Panc1 (cell line): ENCODE measurements at regions of chr13 and their contacts with region 1.

Region 1: DNA sequence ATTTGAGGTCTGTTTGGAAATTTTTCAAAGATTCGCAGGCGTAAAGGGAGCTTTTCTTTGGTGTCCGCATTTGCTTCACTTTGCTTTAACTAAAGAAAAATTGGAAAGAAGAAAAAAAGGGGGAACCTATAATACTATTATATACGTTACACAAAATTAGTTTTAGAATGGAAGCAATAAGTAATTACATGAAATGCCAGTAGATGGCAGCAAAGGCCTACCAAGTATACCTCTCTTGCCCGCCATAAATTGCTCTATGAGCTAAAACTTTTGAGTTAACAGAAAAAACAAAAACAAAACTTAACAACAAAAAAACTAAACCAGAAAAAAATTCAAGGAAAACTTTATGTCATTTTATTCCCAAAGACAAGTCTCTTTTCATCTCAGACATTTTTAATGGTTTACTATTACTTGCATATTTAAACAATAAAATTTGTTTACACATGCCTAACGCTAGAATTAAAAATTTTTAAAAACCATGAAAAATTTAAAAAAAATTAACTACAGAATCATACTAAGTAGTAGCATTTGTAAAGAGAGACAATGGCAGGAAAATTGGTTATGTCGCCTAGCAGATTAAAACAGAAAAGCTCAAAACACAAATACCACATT is 271.4 kb downstream of the NALCN start:
- DNase-seq: no peak
- ATAC-seq: no peak
- H3K4me3 ChIP-seq: no peak overlapping the region
- H3K27ac ChIP-seq: no peak overlapping the region
- H3K4me1 ChIP-seq: no peaks in the 10 kb centered on the region; the same call in 1 of the 2 replicates
- H3K27me3 ChIP-seq: no peaks in the 10 kb centered on the region
- CTCF ChIP-seq: peak; percentile 40; the same call in 1 of the 2 replicates

Region 2: DNA sequence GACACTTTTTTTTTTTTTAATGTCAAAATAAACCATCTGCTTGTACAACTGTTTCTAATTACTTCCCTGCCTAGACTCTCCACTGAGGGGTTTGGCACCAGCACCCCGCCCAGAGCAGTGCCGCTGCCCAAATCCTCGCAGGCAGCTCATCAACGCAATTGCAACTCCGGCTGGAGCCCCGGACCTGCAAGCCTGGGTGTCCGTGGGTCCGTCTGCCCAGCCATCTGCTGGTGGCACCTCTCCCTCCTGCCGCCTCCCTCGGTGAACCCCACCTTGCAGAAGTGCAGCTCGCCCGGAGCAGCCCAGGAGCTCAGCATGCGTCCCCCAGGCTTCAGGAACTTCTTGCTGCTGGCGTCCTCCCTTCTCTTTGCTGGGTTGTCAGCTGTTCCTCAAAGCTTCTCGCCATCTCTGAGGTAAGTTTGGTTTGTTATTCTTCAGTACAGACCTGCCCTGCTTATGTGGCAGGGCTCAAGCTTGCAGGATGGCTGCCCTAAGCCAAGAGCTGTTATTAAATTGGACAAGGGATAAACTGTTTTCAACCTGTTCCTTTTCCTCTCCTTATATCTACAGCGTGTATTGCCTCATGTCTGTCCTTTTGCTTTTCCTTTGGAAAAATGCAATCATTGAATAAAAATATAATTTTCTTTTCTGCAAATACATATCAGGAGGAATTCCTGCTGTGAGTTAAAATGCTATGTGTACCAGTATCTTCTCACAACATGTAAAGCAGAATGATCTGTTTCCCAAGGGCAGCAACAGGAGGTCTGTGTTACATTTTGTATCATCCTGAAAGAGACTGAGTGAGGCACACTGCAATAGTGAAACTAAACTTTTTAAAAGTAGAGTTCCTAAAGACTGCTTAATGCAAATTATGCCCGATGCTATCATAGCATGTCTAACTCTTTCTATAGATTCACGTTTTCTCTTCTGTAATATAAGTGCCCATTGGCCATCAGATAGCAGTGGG is 307.9 kb after region 1 on chr13 and contains the start of gene ITGBL1:
- CTCF ChIA-PET with region 1: no interaction called
- POLR2A ChIA-PET with region 1: no interaction called
- in situ Hi-C with region 1: no loop called
- intact Hi-C with region 1: loop called (anchors 5 kb)
- DNase-seq: no peak
- ATAC-seq: peak; percentile 45
- H3K4me3 ChIP-seq: peak within 1 kb of the TSS; percentile 56 to 76
- H3K27ac ChIP-seq: peak within 1 kb of the TSS; percentile 86
- H3K4me1 ChIP-seq: peaks cover 34% of the 10 kb centered on the region
- H3K27me3 ChIP-seq: no peaks in the 10 kb centered on the region
- CTCF ChIP-seq: no peak
- total RNA-seq, gene ITGBL1: 14.3 TPM

Region 3: GRCh38 chr13:101757446-101758039 is 612.6 kb after region 1 on chr13:
- CTCF ChIA-PET with region 1: interaction called, 3 read pairs
- POLR2A ChIA-PET with region 1: no interaction called
- in situ Hi-C with region 1: no loop called
- intact Hi-C with region 1: loop called (anchors 5 kb)
- DNase-seq: peak; percentile 13
- ATAC-seq: peak; percentile 81; the same call in 1 of the 2 replicates
- H3K4me3 ChIP-seq: no peak overlapping the region
- H3K27ac ChIP-seq: no peak overlapping the region
- H3K4me1 ChIP-seq: no peaks in the 10 kb centered on the region; the same call in 1 of the 2 replicates
- H3K27me3 ChIP-seq: no peaks in the 10 kb centered on the region
- CTCF ChIP-seq: peak; percentile 46; the same call in 1 of the 2 replicates

Region 4: GRCh38 chr13:101942038-101942437 is 797.1 kb after region 1 on chr13:
- CTCF ChIA-PET with region 1: no interaction called
- POLR2A ChIA-PET with region 1: no interaction called
- in situ Hi-C with region 1: no loop called
- intact Hi-C with region 1: loop called (anchors 5 kb)
- DNase-seq: peak; percentile 13
- ATAC-seq: peak; percentile 82
- H3K4me3 ChIP-seq: no peak overlapping the region
- H3K27ac ChIP-seq: no peak overlapping the region
- H3K4me1 ChIP-seq: no peaks in the 10 kb centered on the region
- H3K27me3 ChIP-seq: peaks cover 3% of the 10 kb centered on the region; the same call in 1 of the 2 replicates
- CTCF ChIP-seq: peak; percentile 58; the same call in 1 of the 2 replicates